ENCODE measurements at regions of chr17 and their contacts with region 1.

Region 1: DNA sequence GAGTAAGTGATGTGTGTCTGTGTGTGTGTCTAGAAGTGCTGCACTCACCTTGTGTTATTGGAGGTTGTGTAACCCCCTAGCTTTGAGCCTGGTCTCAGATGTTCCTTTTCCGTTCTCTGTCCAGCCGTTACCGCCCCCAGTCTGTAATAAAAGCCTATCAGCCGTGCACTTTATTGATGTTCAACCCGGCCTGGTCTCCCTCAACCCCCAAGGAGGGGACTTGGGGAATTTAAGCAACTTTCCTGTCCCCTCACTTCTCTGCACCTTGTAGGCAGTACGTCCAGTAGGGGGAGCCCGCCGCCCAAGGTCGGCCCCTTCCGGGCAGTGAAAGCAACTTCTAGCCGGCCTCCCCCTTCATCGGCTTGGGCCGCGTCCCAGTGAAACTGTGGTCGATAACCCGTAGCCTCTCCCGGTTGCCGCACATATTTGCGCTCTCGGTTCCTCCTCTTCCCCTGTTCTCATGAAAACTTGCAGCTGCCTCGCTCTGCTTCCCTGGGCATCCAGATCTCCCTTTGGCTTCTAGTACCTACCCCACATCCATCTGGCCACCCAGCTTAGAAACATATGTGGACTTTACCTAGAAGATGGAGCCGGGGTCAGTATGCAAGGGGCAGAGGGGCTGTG is 7.9 kb downstream of the PNPO start:
- DNase-seq: peak; percentile 84
- H3K4me3 Mint-ChIP-seq: peak overlapping the region; percentile 43
- H3K27ac Mint-ChIP-seq: peak overlapping the region; percentile 68
- H3K4me1 Mint-ChIP-seq: peaks cover 41% of the 10 kb centered on the region
- H3K27me3 Mint-ChIP-seq: no peaks in the 10 kb centered on the region

Region 2: GRCh38 chr17:47840740-47841603 is 108.3 kb before region 1 on chr17 and contains the start of gene SCRN2:
- CTCF ChIA-PET with region 1: interaction called, 11 read pairs
- POLR2A ChIA-PET with region 1: interaction called, 4 read pairs
- DNase-seq: peak; percentile 90
- H3K4me3 Mint-ChIP-seq: peak within 1 kb of the TSS; percentile 93
- H3K27ac Mint-ChIP-seq: peak within 1 kb of the TSS; percentile 66
- H3K4me1 Mint-ChIP-seq: peaks cover 36% of the 10 kb centered on the region
- H3K27me3 Mint-ChIP-seq: peaks cover 20% of the 10 kb centered on the region
- total RNA-seq, gene SCRN2: 29.1 to 29.8 TPM

Region 3: GRCh38 chr17:47929218-47930000 is 19.8 kb before region 1 on chr17:
- CTCF ChIA-PET with region 1: interaction called, 30 read pairs
- POLR2A ChIA-PET with region 1: no interaction called
- DNase-seq: no peak
- H3K4me3 Mint-ChIP-seq: no peak overlapping the region
- H3K27ac Mint-ChIP-seq: no peak overlapping the region
- H3K4me1 Mint-ChIP-seq: peaks cover 7% of the 10 kb centered on the region
- H3K27me3 Mint-ChIP-seq: no peaks in the 10 kb centered on the region

Region 4: DNA sequence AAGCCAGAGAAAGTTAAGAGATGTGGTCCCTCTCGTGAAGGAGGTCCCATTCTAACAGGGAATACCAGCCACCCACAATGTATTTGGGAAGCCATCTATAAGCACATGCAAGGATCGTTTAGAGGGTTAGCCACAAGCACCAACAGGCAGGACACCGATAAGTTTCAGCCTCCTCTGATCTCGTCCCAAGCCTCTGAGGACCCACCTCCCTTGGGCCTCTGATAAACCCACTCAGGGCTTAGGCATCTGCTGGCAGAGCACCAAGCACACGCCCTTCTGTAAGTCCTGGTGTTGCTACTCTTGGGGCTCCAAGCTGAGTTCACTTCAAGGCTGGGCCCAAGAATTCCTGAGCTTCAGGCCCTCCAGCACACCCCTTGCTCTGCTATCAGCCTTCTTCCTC is 13.3 kb before region 1 on chr17:
- CTCF ChIA-PET with region 1: interaction called, 30 read pairs
- POLR2A ChIA-PET with region 1: interaction called, 18 read pairs
- DNase-seq: no peak
- H3K4me3 Mint-ChIP-seq: no peak overlapping the region
- H3K27ac Mint-ChIP-seq: no peak overlapping the region
- H3K4me1 Mint-ChIP-seq: peaks cover 13% of the 10 kb centered on the region
- H3K27me3 Mint-ChIP-seq: no peaks in the 10 kb centered on the region

Region 5: DNA sequence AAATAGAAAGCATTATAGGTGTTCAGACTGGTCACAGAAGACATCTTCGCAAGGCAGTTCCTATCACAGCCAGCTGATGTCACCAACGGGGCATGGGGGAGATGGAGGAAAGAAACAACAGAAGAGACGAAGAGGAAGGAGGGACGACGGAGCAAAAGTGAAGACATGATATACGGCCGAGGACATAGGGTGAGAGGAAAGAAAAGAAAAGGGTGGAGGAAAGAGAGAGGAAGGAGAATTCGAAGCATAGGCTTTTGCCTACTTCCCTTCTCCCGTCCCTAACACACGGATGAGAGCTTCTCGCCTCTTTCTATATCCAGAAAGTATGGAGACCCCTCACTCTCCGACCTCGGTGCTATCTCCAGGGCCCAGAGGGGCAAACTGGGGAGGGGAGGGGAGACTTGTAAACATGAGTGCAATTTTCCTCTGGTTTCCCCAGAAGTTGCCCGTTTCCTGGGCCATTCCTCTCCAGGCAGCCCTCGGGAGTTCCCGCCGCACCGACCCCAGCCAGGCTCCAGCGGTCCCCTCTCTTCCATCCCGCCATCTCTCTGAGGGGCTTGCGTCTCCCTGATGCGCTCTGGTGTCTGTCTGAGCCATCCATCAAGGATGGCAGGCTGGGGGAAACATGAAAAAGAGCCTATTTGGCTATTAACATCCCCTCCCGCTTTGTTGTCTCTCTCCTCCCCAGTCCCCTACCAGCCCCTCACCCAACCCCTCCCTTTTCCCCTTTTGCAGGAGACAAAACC is 62.3 kb after region 1 on chr17:
- CTCF ChIA-PET with region 1: interaction called, 49 read pairs
- POLR2A ChIA-PET with region 1: interaction called, 6 read pairs
- DNase-seq: peak; percentile 68
- H3K4me3 Mint-ChIP-seq: peak overlapping the region; percentile 73
- H3K27ac Mint-ChIP-seq: no peak overlapping the region
- H3K4me1 Mint-ChIP-seq: peaks cover 23% of the 10 kb centered on the region
- H3K27me3 Mint-ChIP-seq: peaks cover 49% of the 10 kb centered on the region